Caco-2 (cell line): ENCODE measurements at regions of chr9 and their contacts with region 1.

Region 1: GRCh38 chr9:112750111-112750767 is at the start of gene SNX30:
- DNase-seq: peak; percentile 93
- H3K4me3 ChIP-seq: peak within 1 kb of the TSS; percentile 99
- H3K4me3 Mint-ChIP-seq: peak within 1 kb of the TSS; percentile 96
- H3K27ac Mint-ChIP-seq: peak within 1 kb of the TSS; percentile 85
- H3K4me1 ChIP-seq: peaks cover 42% of the 10 kb centered on the region
- H3K4me1 Mint-ChIP-seq: peaks cover 25% of the 10 kb centered on the region
- H3K27me3 ChIP-seq: no peaks in the 10 kb centered on the region
- H3K27me3 Mint-ChIP-seq: no peaks in the 10 kb centered on the region
- CTCF ChIP-seq: peak in 1 of 2 experiments; percentile 5
- total RNA-seq, gene SNX30: 20.6 and 21.8 TPM in 2 replicates

Region 2: DNA sequence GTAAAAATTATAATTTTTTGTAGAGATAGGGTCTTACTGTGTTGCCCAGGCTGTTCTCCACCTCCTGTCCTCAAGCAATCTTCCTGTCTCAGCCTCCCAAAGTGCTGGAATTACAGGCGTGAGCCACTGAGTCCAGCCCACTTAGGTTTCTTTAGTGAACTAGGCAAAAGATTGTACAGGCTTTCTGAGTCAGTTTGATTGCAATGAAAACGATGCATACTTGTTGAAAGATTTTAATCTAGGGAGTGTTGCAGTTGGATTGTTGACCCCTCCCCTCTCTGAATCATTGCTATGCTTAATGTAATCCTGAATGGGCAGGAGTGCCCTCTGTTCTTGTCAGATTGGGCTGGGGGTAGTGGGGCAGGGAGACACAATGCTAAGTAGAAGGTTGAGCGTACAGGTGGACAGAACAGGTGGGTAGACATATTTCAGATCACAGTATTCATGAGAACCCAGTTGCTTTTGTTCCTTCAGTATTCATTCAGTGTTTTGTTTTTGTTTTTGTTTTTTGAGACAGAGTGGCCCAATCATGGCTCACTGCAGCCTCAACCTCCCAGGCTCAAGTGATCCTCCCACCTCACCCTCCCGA is 193.6 kb before region 1 on chr9:
- CTCF ChIA-PET with region 1: no interaction called
- POLR2A ChIA-PET with region 1: no interaction called
- intact Hi-C with region 1: no loop called
- DNase-seq: no peak
- H3K4me3 ChIP-seq: no peak overlapping the region
- H3K4me3 Mint-ChIP-seq: no peak overlapping the region
- H3K27ac Mint-ChIP-seq: no peak overlapping the region
- H3K4me1 ChIP-seq: peaks cover 6% of the 10 kb centered on the region
- H3K4me1 Mint-ChIP-seq: peaks cover 9% of the 10 kb centered on the region
- H3K27me3 ChIP-seq: no peaks in the 10 kb centered on the region
- H3K27me3 Mint-ChIP-seq: no peaks in the 10 kb centered on the region
- CTCF ChIP-seq: no peak

Region 3: DNA sequence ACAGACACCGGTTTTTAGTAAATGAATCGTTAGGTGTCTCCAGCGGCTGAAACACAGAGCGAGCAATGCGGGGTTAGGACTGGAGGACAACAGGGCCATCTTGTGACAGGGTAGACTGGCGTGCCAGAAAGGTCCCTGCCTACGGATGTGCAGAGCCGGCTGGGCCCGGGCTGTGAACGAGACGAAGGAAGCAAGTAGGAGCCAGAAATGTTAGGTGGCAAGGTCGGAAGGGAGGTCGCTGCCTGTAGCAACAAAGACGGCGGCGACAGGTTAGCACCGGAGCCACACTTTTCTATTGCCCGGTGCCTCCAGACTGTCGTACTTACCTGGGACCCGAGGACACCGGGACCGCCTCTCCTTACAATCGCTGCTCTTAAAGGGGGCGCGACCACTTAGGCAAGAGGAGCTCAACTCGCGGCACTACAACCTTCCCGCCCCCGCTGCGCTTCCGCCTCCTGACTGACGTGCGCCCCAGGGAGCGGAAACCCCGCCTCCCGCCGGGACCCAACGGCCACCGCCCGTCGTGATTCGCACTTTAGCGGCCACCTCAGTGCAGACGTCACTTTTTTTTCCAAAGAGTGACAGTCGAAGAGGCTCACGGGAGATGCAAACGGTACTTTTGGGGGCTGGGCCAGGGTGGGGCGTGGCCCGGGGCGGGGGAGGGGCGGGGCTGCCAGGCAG is 32.4 kb before region 1 on chr9 and contains the start of gene INIP:
- CTCF ChIA-PET with region 1: interaction called, 9 read pairs
- POLR2A ChIA-PET with region 1: interaction called, 7 read pairs
- intact Hi-C with region 1: loop called (anchors 1 kb)
- DNase-seq: peak; percentile 98
- H3K4me3 ChIP-seq: peak within 1 kb of the TSS; percentile 46
- H3K4me3 Mint-ChIP-seq: peak within 1 kb of the TSS; percentile 88
- H3K27ac Mint-ChIP-seq: peak within 1 kb of the TSS; percentile 87
- H3K4me1 ChIP-seq: no peaks in the 10 kb centered on the region
- H3K4me1 Mint-ChIP-seq: peaks cover 7% of the 10 kb centered on the region
- H3K27me3 ChIP-seq: no peaks in the 10 kb centered on the region
- H3K27me3 Mint-ChIP-seq: no peaks in the 10 kb centered on the region
- CTCF ChIP-seq: no peak
- total RNA-seq, gene INIP: 30.2 and 31.9 TPM in 2 replicates

Region 4: DNA sequence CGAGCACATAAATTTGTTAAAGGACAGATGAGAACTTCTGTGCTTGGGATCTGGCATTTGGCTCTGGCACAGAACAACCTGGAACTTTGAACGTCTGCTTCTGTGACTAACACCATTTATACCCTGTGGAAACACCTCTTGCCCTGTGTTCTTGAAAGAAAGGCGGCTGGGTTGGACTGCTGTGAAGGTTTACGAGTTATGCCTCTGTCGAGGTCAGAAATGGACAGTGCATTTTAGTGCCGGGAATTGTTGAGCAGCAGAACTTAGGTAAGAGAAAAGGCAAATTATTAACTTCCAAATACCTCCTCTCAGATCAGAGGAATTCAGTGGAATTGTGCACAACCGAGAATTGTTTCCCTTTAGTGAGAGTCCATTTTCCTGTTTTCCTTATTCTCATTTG is 18.3 kb before region 1 on chr9:
- CTCF ChIA-PET with region 1: interaction called, 4 read pairs
- POLR2A ChIA-PET with region 1: interaction called, 3 read pairs
- intact Hi-C with region 1: loop called (anchors 1 kb)
- DNase-seq: peak; percentile 52 to 80
- H3K4me3 ChIP-seq: no peak overlapping the region
- H3K4me3 Mint-ChIP-seq: peak overlapping the region; percentile 47
- H3K27ac Mint-ChIP-seq: peak overlapping the region; percentile 69
- H3K4me1 ChIP-seq: peaks cover 11% of the 10 kb centered on the region
- H3K4me1 Mint-ChIP-seq: peaks cover 8% of the 10 kb centered on the region
- H3K27me3 ChIP-seq: no peaks in the 10 kb centered on the region
- H3K27me3 Mint-ChIP-seq: no peaks in the 10 kb centered on the region
- CTCF ChIP-seq: no peak

Region 5: DNA sequence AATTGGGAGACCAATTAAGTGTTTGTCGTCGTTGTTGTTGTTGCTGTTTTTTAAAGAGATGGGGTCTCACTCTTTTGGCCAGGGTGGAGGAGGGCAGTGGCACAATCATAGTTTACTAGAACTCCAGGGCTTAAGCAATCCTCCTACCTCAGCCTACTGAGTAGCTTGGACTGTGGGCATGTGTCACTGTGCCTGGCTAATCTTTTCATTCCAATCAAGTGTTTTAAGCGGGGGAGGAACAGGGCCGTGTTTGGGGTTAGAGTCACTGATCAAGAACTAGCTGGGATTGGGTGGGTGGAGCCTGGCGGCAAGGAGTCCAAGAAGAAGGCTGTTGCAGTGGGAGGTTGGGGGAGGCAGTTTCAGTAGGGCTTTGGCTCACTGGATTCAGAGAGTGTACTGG is 14.1 kb after region 1 on chr9:
- CTCF ChIA-PET with region 1: interaction called, 10 read pairs
- POLR2A ChIA-PET with region 1: interaction called, 9 read pairs
- intact Hi-C with region 1: loop called (anchors 1 kb)
- DNase-seq: peak; percentile 55 to 77
- H3K4me3 ChIP-seq: peak overlapping the region; percentile 26
- H3K4me3 Mint-ChIP-seq: peak overlapping the region; percentile 60
- H3K27ac Mint-ChIP-seq: peak overlapping the region; percentile 58
- H3K4me1 ChIP-seq: peaks cover 31% of the 10 kb centered on the region
- H3K4me1 Mint-ChIP-seq: peaks cover 43% of the 10 kb centered on the region
- H3K27me3 ChIP-seq: no peaks in the 10 kb centered on the region
- H3K27me3 Mint-ChIP-seq: no peaks in the 10 kb centered on the region
- CTCF ChIP-seq: no peak